ENCODE measurements at regions of chr10 and their contacts with region 1.

Region 1: DNA sequence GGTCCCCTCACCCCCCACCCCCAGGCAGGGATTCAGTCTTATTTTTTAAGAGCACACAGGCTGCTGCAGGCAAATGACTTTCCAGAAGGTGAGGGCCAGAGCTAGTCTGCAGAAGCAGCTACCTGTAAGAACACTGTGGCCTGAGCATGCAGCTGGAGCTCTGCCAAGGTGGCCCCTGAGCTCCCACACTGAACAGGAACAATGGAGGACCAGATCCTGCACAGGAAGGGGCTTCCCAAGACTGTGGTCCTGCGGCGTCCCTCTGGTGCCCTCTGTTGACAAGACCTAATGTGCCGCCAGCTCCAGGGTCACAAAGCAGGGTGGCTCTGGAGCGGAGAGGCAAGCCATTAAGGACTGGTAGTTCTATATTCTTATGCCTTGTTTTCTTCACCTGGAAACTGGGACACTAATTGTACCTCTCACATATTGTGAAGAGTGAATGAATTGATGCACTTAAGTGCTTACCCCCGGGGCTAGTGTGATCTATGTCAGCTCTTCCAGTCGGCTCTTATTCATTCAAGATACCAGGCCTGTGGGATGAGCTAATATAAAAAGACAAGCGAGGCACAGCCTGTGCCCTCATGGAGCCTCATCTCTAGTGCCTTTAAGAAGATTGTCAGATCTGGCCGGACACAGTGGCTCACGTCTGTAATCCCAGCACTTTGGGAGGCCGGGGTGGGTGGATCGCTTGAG is 8.0 kb upstream of the BEND7 start:
- DNase-seq: peak; percentile 41
- ATAC-seq: peak; percentile 98
- H3K4me3 ChIP-seq: no peak overlapping the region
- H3K27ac ChIP-seq: no peak overlapping the region
- H3K4me1 ChIP-seq: no peaks in the 10 kb centered on the region
- H3K27me3 ChIP-seq: peaks cover 24% of the 10 kb centered on the region
- CTCF ChIP-seq: peak; percentile 67
- POLR2A ChIP-seq: no peak
- RAD21 ChIP-seq: peak; percentile 66

Region 2: GRCh38 chr10:13492493-13493175 is 44.2 kb before region 1 on chr10:
- CTCF ChIA-PET with region 1: no interaction called
- POLR2A ChIA-PET with region 1: no interaction called
- dilution Hi-C with region 1: no loop called
- in situ Hi-C with region 1: no loop called
- intact Hi-C with region 1: no loop called
- DNase-seq: no peak
- ATAC-seq: no peak
- H3K4me3 ChIP-seq: no peak overlapping the region
- H3K27ac ChIP-seq: no peak overlapping the region
- H3K4me1 ChIP-seq: no peaks in the 10 kb centered on the region
- H3K27me3 ChIP-seq: no peaks in the 10 kb centered on the region
- CTCF ChIP-seq: no peak
- POLR2A ChIP-seq: no peak
- RAD21 ChIP-seq: no peak

Region 3: DNA sequence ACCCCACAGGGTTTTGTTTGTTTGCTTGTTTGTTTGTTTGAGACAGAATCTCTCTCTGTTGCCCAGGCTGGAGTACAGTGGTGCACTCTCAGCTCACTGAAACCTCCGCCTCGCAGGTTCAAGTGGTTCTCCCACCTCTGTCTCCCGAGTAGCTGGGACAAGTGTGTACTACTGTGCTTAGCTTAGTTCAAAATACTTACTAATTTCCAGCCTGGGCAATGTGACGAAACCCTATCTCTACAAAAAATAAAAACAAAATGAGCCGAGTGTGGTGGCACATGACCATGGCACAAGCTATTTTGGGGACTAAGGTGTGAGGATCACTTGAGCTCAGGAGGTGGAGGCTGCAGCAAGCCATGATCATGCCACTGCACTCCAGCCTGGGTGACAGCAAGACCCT is 34.7 kb after region 1 on chr10:
- CTCF ChIA-PET with region 1: no interaction called
- POLR2A ChIA-PET with region 1: no interaction called
- dilution Hi-C with region 1: no loop called
- in situ Hi-C with region 1: no loop called
- intact Hi-C with region 1: loop called (anchors 5 kb)
- DNase-seq: no peak
- ATAC-seq: no peak
- H3K4me3 ChIP-seq: no peak overlapping the region
- H3K27ac ChIP-seq: no peak overlapping the region
- H3K4me1 ChIP-seq: no peaks in the 10 kb centered on the region
- H3K27me3 ChIP-seq: peaks cover 7% of the 10 kb centered on the region
- CTCF ChIP-seq: no peak
- POLR2A ChIP-seq: no peak
- RAD21 ChIP-seq: no peak